ENCODE measurements at regions of chr11 and their contacts with region 1.

Region 1: DNA sequence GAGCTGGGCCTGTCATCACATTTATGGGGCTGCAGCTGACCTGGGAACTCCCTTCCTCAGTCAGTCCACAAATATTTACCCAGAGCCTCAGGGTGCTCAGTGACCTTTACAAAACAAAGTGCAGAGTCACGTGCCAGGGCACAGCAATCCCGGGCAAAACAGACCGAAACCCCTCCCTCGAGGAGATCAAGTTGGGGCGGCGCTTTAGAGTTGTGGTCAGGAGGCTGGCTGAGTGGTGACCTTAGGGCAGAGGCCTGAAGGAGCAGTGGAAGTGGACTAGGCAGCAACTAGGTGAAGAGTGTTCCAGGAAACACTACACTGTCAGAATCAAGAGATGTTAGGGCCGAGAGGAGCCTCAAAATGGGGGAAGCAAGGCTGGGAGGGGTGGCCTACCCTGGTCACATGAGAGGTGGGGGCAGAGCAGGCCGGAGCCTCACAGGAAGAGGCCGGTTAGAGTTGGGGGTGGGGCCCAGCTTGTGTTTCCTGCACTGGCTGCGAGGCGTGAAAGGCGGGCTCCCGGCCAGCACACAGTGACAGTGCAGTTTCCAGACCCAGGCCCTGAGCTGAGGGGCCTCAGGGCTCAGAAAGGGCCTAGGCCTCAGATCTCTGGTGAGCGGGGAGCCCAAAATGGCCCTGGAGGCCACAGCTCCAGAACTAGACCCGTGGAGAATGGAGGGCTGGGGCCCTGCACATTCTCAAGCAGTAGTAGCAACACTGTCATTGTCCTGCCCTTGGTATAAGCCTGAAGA is 3.7 kb upstream of the NEAT1 start:
- DNase-seq: peak; percentile 75

Region 2: GRCh38 chr11:65069217-65069616 is 349.7 kb before region 1 on chr11:
- CTCF ChIA-PET with region 1: no interaction called
- POLR2A ChIA-PET with region 1: no interaction called
- DNase-seq: no peak

Region 3: DNA sequence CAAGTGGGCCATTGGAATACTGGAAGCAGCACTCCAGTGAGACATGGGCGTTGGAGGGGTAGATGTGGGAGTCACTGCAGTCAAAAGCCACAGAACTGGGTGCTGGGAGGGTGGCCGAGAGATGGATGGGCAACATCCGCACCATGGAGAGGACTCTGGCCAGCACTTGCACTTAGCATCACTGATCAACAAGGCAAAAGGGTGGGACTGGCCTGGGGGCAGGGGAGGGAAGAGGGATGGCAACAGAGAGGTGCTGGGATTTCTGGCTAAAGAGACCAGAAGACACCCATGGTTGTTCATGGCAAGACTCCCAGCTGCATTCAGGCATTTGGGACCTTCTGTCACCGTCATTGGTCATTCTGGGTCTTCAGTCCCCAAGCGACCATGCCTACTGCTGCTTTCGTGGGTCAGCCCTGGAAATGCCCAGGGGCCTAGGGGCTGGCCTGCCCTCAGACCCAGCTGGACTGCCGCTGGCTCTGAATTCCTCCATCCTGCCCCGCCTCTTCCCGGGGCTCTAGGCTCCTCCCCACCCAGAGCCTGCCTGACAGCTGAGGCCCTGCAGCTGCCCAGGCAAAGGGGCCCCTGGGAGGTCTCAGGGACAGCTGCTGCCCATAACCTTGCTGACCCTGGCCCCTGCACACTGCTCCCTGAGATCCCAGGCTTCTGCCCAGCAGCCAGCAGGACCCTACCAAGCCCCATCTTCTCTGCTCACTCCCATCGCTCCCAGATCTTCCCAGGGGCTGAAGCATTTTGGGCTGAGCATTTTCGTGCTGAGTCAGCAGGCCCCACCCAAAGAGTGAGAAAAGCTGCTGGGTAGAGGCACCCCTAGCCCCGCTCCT is 117.2 kb before region 1 on chr11:
- CTCF ChIA-PET with region 1: no interaction called
- POLR2A ChIA-PET with region 1: no interaction called
- DNase-seq: no peak

Region 4: GRCh38 chr11:65375012-65375411 is 43.9 kb before region 1 on chr11:
- CTCF ChIA-PET with region 1: no interaction called
- POLR2A ChIA-PET with region 1: interaction called, 264 read pairs
- DNase-seq: no peak

Region 5: GRCh38 chr11:65429724-65430405 is 11.0 kb after region 1 on chr11:
- CTCF ChIA-PET with region 1: interaction called, 6 read pairs
- POLR2A ChIA-PET with region 1: interaction called, 67 read pairs
- DNase-seq: no peak

Region 6: DNA sequence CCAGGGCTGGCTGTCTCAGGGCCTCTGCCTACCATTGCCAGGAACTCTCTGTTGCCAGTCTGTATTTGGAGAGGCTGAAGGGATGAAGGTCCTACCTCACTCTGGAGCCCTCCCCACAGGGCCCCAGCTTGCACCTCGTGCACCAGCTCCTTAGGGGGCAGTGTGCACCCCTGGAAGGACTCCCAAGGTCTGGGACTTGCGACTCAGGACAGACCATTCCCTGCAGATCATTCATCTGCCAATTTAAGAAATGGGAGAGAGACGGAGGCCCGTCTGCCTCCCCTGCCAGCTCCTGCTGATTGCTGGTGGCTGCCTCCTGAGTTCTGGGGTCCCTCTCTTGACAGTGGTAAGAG is 52.5 kb after region 1 on chr11:
- CTCF ChIA-PET with region 1: interaction called, 40 read pairs
- POLR2A ChIA-PET with region 1: interaction called, 248 read pairs
- DNase-seq: no peak

Region 7: GRCh38 chr11:65506770-65507505 is 88.1 kb after region 1 on chr11:
- CTCF ChIA-PET with region 1: interaction called, 15 read pairs
- POLR2A ChIA-PET with region 1: interaction called, 1,436 read pairs
- DNase-seq: no peak